Left ventricle myocardium inferior (tissue), 1 donor: ENCODE measurements at regions of chr1 and their contacts with region 1.

Region 1: DNA sequence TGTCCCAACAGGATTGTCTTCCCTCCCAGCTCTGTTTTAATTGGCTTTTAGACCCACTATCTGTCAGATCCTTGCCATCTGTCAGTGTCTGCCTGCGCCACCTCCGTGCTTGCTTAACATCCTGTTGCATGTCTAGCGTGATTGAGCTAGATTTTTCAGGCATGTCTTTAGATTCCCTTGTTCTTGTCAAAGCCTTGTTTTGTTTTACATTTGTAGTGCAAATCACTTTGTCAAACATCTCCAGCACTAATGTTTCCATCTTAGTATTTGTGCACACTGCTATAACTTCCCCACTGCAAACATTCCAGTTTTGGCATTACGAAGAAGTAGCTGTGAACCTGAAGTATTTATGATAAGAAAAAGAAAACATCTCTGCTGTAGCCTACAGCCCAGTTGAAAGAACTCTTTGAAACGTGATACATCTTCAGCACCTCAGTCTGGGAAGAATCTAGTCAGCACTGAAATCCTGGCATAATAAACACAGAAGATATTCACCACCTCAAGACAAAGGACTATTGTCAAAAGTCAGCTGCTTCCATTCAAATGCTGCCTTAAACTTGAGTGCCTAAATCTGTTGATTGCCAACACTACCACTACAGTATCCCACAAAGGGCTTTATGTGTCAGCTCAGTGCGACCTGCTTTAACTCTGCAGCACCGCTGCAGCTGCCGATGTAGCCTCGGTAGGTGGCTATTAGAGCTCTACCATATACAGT is 105.0 kb downstream of the FNBP1L start:
- DNase-seq: peak; percentile 50
- H3K4me3 ChIP-seq: no peak overlapping the region
- H3K27ac ChIP-seq: peak overlapping the region; percentile 89
- H3K4me1 ChIP-seq: peaks cover 47% of the 10 kb centered on the region
- H3K27me3 ChIP-seq: no peaks in the 10 kb centered on the region
- CTCF ChIP-seq: no peak

Region 2: GRCh38 chr1:93447516-93448291 is 105.2 kb before region 1 on chr1 and contains the start of gene FNBP1L:
- intact Hi-C with region 1: loop called (anchors 10 kb)
- DNase-seq: peak; percentile 84
- H3K4me3 ChIP-seq: peak within 1 kb of the TSS; percentile 88
- H3K27ac ChIP-seq: peak within 1 kb of the TSS; percentile 89
- H3K4me1 ChIP-seq: peaks cover 37% of the 10 kb centered on the region
- H3K27me3 ChIP-seq: no peaks in the 10 kb centered on the region
- CTCF ChIP-seq: no peak
- total RNA-seq, gene FNBP1L: 28.0 TPM